ENCODE measurements at regions of chr6 and their contacts with region 1.

Region 1: DNA sequence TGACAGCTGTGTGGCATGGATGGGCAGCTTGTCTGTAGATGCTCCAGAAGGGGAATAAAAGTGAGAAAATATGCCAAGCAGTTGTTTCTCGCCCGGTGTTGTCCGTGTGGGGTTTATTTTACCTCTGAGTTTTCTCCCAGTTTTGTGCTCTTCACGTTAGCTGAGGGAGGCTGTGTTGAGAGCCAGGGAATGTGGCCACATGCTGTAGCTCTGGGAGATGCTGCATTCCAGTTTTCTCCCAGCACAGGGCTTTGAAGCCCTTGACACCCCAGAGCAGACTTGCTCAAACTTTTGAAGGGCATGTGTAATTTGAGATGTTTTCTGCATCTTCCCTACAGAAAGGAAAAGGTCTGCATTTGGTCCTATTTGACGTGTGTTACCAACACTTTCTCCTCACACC is 67.7 kb downstream of the RREB1 start:
- DNase-seq: no peak

Region 2: GRCh38 chr6:7236312-7237209 is 61.1 kb after region 1 on chr6:
- intact Hi-C with region 1: loop called (anchors 2 kb)
- DNase-seq: peak in 1 of 10 donors; percentile 43